HCT116 (cell line): ENCODE measurements at regions of chr11 and their contacts with region 1.

Region 1: GRCh38 chr11:65888163-65888814 is at the start of gene FIBP:
- DNase-seq: peak; percentile 91
- ATAC-seq: peak; percentile 65
- H3K4me3 ChIP-seq: peak within 1 kb of the TSS; percentile 90 to 92
- H3K27ac ChIP-seq: peak within 1 kb of the TSS; percentile 97
- H3K4me1 ChIP-seq: peaks cover 18 to 73% of the 10 kb centered on the region in 2 experiments
- H3K27me3 ChIP-seq: no peaks in the 10 kb centered on the region
- CTCF ChIP-seq: peak in 2 of 3 experiments; percentile 68 to 78; a peak in 4 of 6 replicates
- POLR2A ChIP-seq: peak; percentile 63
- RAD21 ChIP-seq: no peak
- total RNA-seq, gene FIBP: 96.0 TPM

Region 2: DNA sequence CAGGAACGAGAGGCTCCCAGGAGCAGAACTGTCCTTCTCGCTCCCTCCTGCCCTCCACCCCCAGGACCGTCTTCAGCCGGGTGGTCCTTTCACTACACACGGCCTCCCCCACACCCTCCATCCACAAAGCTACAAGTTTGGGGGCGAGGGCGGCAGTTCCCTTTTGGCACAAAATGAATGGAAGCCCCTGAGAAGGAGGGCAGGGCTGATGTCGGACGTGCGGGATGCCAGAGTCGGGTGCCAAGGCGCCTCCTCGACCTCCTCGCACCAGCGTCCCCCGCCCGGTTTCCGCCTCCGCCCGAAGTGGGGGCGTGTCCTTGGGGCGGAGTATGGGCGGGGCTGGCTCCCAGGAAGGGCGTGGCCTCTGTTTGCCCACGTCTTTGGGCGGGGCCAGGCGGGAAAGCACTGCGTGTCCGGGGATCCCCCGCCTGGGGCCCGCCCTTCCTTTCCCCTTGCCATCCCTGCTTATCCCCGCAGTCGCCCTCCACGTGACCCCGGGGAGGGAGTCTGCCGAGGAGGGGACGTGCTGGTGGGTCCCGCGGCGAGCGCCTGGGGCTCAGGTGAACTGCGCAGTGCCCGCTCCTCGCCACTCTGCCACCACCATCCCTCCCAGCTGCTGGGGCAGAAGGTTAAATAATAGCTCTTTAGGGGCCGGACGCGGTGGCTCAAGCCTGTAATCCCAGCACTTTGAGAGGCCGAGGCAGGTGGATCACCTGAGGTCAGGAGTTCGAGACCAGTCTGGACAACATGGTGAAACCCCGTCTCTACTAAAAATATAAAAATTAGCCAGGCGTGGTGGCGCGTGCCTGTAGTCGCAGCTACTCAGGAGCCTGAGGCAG is 14.8 kb before region 1 on chr11:
- CTCF ChIA-PET with region 1: interaction called, 21 read pairs
- POLR2A ChIA-PET with region 1: interaction called, 6 read pairs
- RAD21 ChIA-PET with region 1: interaction called in 1 of 2 experiments, 3 read pairs
- intact Hi-C with region 1: no loop called
- DNase-seq: peak; percentile 83
- ATAC-seq: peak; percentile 90
- H3K4me3 ChIP-seq: peak overlapping the region; percentile 52 to 55
- H3K27ac ChIP-seq: peak overlapping the region; percentile 55
- H3K4me1 ChIP-seq: peaks cover 10 to 13% of the 10 kb centered on the region in 2 experiments; a peak in 3 of 4 replicates
- H3K27me3 ChIP-seq: no peaks in the 10 kb centered on the region
- CTCF ChIP-seq: no peak
- POLR2A ChIP-seq: no peak
- RAD21 ChIP-seq: no peak

Region 3: GRCh38 chr11:65911682-65912568 is 23.6 kb after region 1 on chr11:
- CTCF ChIA-PET with region 1: interaction called, 19 read pairs
- POLR2A ChIA-PET with region 1: interaction called, 124 read pairs
- RAD21 ChIA-PET with region 1: interaction called, 3 to 10 read pairs
- intact Hi-C with region 1: loop called (anchors 1 kb)
- DNase-seq: peak; percentile 72
- ATAC-seq: peak; percentile 28
- H3K4me3 ChIP-seq: peak overlapping the region; percentile 7 to 25; a peak in 2 of 4 replicates
- H3K27ac ChIP-seq: peak overlapping the region; percentile 75
- H3K4me1 ChIP-seq: peaks cover 59 to 97% of the 10 kb centered on the region in 2 experiments
- H3K27me3 ChIP-seq: no peaks in the 10 kb centered on the region
- CTCF ChIP-seq: peak in 2 of 3 experiments; percentile 40 to 44; a peak in 4 of 6 replicates
- POLR2A ChIP-seq: peak; percentile 52
- RAD21 ChIP-seq: no peak

Region 4: DNA sequence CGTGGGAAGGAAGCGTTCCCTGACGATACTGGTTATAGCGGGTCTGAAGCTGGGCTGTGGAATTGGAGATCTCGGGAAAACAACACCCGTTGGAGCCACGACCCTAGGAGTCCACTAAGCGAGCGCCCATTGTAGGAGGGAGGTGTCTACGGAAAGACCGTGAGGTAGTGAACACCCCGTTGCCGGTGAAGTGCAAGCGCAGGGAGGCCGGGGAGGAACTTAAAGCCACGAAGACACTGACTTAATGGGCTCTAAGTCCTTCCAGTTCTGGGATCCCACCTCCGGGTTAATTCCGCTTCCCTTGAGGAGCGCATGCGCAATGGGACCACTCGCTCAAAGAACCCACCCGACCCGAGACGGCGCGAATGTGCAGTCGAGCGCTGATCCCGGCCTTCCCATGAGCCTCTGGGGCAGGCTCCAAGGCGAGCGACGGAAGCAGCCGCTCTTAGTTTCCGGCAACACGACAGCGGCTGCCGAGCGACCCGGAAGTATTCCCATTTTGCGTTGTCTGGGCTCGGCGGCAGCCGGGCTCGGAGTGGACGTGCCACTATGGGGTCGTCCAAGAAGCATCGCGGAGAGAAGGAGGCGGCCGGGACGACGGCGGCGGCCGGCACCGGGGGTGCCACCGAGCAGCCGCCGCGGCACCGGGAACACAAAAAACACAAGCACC is 73.1 kb after region 1 on chr11 and contains the start of gene SART1:
- CTCF ChIA-PET with region 1: no interaction called
- POLR2A ChIA-PET with region 1: interaction called, 3 read pairs
- RAD21 ChIA-PET with region 1: interaction called, 3 to 4 read pairs
- intact Hi-C with region 1: loop called (anchors 2 kb)
- DNase-seq: peak; percentile 95
- ATAC-seq: peak; percentile 90
- H3K4me3 ChIP-seq: peak within 1 kb of the TSS; percentile 76
- H3K27ac ChIP-seq: peak within 1 kb of the TSS; percentile 81
- H3K4me1 ChIP-seq: peaks cover 8 to 21% of the 10 kb centered on the region in 2 experiments; a peak in 3 of 4 replicates
- H3K27me3 ChIP-seq: no peaks in the 10 kb centered on the region
- CTCF ChIP-seq: no peak
- POLR2A ChIP-seq: peak; percentile 71
- RAD21 ChIP-seq: no peak
- total RNA-seq, gene SART1: 47.9 TPM